ENCODE measurements at regions of chr3 and their contacts with region 1.

Region 1: GRCh38 chr3:41881233-41881821 is 80.6 kb downstream of the ULK4 start:
- DNase-seq: peak; percentile 73
- ATAC-seq: no peak; the same call in 1 of the 2 replicates
- H3K4me3 ChIP-seq: no peak overlapping the region
- H3K27ac ChIP-seq: no peak overlapping the region
- H3K4me1 ChIP-seq: no peaks in the 10 kb centered on the region
- H3K27me3 ChIP-seq: no peaks in the 10 kb centered on the region
- CTCF ChIP-seq: peak; percentile 76

Region 2: DNA sequence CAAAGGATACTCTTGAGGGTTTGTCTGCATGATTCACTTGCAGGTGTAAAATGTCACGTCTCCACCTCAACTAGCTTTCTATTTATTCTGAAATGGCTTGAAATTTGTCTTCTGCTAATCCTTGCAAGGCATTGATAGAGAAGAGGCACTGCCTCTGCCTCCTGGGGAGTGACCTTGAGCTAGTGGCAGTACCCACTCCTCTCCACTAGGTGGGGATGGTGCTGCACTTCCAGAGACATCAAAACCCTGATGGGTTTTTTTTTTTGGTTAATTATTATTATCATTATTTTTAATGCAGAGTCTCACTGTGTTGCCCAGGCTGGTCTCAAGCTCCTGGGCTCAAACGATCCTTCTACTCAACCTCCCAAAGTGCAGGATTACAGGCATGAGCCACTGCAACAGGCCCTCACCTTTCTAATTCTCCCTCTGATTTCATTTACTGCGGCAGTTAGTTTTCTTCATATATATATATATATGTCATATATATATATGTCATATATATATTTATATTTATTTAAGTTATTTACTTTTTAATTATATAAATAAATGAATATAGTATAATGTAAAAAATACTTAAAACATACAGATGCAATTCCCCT is 1689.4 kb before region 1 on chr3:
- CTCF ChIA-PET with region 1: no interaction called
- POLR2A ChIA-PET with region 1: no interaction called
- intact Hi-C with region 1: loop called (anchors 10 kb)
- DNase-seq: peak; percentile 78
- ATAC-seq: peak; percentile 70
- H3K4me3 ChIP-seq: no peak overlapping the region
- H3K27ac ChIP-seq: no peak overlapping the region
- H3K4me1 ChIP-seq: no peaks in the 10 kb centered on the region
- H3K27me3 ChIP-seq: peaks cover 20% of the 10 kb centered on the region
- CTCF ChIP-seq: peak; percentile 83

Region 3: GRCh38 chr3:40920041-40920440 is 961.3 kb before region 1 on chr3:
- CTCF ChIA-PET with region 1: no interaction called
- POLR2A ChIA-PET with region 1: no interaction called
- intact Hi-C with region 1: loop called (anchors 5 kb)
- DNase-seq: peak; percentile 61
- ATAC-seq: peak; percentile 35; the same call in 1 of the 2 replicates
- H3K4me3 ChIP-seq: no peak overlapping the region
- H3K27ac ChIP-seq: no peak overlapping the region
- H3K4me1 ChIP-seq: peaks cover 8% of the 10 kb centered on the region
- H3K27me3 ChIP-seq: no peaks in the 10 kb centered on the region
- CTCF ChIP-seq: no peak

Region 4: DNA sequence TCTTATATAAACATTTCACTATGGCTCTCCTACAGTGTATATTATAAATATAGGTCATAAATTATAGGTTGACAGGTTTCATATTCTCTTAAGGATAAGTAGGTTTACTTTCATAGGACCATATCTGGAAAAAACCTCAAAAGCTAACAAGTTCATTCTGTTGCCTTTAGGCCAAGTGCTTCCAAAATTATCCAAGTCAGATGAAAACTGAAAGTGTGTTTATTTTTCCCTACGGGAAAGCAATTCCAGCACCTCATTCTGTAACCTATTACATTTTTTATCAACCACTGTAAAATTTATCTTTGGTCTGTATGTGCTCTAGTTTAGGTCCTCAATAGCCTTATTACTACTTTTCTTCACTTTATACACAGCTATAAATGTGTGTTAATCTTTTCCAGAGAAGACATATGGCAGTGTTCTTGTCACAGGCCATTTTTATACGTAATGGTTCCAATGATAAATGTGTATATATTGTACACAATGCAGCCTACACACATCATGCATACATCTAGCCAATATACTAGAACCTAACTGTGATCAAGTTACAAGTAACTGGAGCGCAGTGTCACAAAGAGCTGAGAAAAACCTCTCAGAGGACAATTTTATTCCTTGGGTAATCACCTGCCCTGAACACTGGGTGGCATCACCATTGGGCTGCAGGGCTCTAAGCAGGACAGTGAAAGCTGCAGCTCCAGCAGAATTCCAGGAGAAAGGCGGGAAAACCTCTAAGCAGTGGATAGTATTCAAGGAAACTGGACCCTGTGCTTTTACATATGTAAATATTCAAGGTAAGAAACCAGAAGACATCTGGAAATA is 430.7 kb before region 1 on chr3:
- CTCF ChIA-PET with region 1: no interaction called
- POLR2A ChIA-PET with region 1: no interaction called
- intact Hi-C with region 1: loop called (anchors 1 kb)
- DNase-seq: peak; percentile 44
- ATAC-seq: peak; percentile 76
- H3K4me3 ChIP-seq: no peak overlapping the region
- H3K27ac ChIP-seq: no peak overlapping the region
- H3K4me1 ChIP-seq: no peaks in the 10 kb centered on the region
- H3K27me3 ChIP-seq: no peaks in the 10 kb centered on the region
- CTCF ChIP-seq: peak; percentile 55

Region 5: DNA sequence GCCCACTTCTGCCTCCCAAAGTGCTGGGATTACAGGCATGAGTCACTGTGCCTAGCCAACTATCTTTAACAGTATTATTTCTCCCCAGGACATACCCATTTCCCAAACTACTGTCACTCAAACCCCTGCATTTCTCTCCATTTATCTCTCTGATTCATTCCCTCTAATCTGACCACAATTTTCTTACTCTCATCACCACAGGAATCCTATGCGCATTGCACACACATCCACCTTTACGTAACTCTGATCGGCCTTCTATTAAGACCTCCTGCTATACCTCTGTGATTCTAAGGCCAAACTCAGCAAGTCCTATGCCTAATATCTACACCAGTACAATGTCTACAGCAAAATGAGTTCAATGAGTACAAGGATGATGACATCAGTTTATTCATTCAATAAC is 154.4 kb before region 1 on chr3:
- CTCF ChIA-PET with region 1: interaction called, 10 read pairs
- POLR2A ChIA-PET with region 1: no interaction called
- intact Hi-C with region 1: no loop called
- DNase-seq: no peak
- ATAC-seq: no peak
- H3K4me3 ChIP-seq: no peak overlapping the region
- H3K27ac ChIP-seq: no peak overlapping the region
- H3K4me1 ChIP-seq: no peaks in the 10 kb centered on the region
- H3K27me3 ChIP-seq: no peaks in the 10 kb centered on the region
- CTCF ChIP-seq: no peak